Mammary epithelial cell (primary cell): ENCODE measurements at regions of chrX and their contacts with region 1.

Region 1: GRCh38 chrX:44382871-44383270 is 39.4 kb upstream of the EFHC2 start:
- DNase-seq: no peak
- H3K4me3 ChIP-seq: no peak overlapping the region
- H3K27ac ChIP-seq: no peak overlapping the region
- H3K4me1 ChIP-seq: no peaks in the 10 kb centered on the region
- H3K27me3 ChIP-seq: no peaks in the 10 kb centered on the region
- CTCF ChIP-seq: no peak

Region 2: GRCh38 chrX:44314259-44314734 is 68.6 kb before region 1 on chrX:
- CTCF ChIA-PET with region 1: no interaction called
- dilution Hi-C with region 1: loop called (anchors 10 kb)
- in situ Hi-C with region 1: no loop called
- intact Hi-C with region 1: no loop called
- DNase-seq: peak; percentile 6
- H3K4me3 ChIP-seq: no peak overlapping the region
- H3K27ac ChIP-seq: no peak overlapping the region
- H3K4me1 ChIP-seq: no peaks in the 10 kb centered on the region
- H3K27me3 ChIP-seq: peaks cover 4% of the 10 kb centered on the region
- CTCF ChIP-seq: no peak

Region 3: GRCh38 chrX:44459501-44459900 is 76.6 kb after region 1 on chrX:
- CTCF ChIA-PET with region 1: no interaction called
- dilution Hi-C with region 1: loop called (anchors 5 kb)
- in situ Hi-C with region 1: no loop called
- intact Hi-C with region 1: no loop called
- DNase-seq: peak; percentile 24
- H3K4me3 ChIP-seq: no peak overlapping the region
- H3K27ac ChIP-seq: no peak overlapping the region
- H3K4me1 ChIP-seq: peaks cover 3% of the 10 kb centered on the region
- H3K27me3 ChIP-seq: peaks cover 6% of the 10 kb centered on the region
- CTCF ChIP-seq: no peak